BJ (cell line): ENCODE measurements at regions of chr17 and their contacts with region 1.

Region 1: DNA sequence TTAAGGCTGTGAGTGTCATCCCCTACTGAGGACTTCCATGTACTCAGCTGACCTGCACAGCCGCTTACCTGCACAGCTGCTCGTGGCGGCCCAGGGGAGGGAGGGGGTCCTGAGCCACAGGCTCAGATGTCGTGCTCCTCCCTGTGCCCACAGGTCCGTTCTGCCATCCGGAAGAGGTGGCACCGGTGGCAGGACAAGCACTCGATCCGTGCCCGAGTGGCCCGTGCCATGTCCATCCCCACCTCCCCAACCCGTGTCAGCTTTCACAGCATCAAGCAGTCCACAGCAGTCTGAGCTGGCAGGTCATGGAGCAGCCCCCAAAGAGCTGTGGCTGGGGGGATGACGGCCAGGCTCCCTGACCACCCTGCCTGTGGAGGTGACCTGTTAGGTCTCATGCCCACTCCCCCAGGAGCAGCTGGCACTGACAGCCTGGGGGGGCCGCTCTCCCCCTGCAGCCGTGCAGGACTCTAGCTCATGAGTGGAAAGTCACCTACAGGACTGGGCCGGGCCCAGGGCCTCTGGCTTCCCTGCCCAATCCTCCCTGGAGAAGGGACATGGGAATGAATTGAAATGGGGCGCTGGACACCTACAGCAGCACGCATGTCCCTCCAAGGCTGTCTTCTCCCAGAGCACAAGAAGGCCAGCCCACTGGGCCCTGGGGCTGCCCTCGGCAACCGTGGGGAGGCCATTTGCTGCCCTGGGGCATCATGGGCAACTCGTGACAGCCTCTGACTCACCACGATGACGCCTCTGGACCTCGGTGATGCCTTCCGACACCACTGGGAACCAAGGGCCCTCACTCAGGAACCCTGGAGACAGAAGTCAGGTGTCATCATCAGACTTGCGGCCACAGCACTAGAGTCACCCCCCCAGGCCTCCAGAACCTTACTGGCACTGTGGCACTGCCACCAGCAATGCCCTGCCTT is 9.9 kb upstream of the SPPL2C start:
- DNase-seq: no peak
- H3K4me3 ChIP-seq: no peak overlapping the region
- H3K27me3 ChIP-seq: peaks cover 3% of the 10 kb centered on the region; the same call in 1 of the 2 replicates
- CTCF ChIP-seq: no peak

Region 2: GRCh38 chr17:45852535-45853297 is 18.0 kb after region 1 on chr17:
- CTCF ChIA-PET with region 1: interaction called, 19 read pairs
- POLR2A ChIA-PET with region 1: no interaction called
- DNase-seq: no peak
- H3K4me3 ChIP-seq: no peak overlapping the region
- H3K27me3 ChIP-seq: peaks cover 6% of the 10 kb centered on the region
- CTCF ChIP-seq: peak; percentile 89